AG04450 (cell line): ENCODE measurements at regions of chr20 and their contacts with region 1.

Region 1: DNA sequence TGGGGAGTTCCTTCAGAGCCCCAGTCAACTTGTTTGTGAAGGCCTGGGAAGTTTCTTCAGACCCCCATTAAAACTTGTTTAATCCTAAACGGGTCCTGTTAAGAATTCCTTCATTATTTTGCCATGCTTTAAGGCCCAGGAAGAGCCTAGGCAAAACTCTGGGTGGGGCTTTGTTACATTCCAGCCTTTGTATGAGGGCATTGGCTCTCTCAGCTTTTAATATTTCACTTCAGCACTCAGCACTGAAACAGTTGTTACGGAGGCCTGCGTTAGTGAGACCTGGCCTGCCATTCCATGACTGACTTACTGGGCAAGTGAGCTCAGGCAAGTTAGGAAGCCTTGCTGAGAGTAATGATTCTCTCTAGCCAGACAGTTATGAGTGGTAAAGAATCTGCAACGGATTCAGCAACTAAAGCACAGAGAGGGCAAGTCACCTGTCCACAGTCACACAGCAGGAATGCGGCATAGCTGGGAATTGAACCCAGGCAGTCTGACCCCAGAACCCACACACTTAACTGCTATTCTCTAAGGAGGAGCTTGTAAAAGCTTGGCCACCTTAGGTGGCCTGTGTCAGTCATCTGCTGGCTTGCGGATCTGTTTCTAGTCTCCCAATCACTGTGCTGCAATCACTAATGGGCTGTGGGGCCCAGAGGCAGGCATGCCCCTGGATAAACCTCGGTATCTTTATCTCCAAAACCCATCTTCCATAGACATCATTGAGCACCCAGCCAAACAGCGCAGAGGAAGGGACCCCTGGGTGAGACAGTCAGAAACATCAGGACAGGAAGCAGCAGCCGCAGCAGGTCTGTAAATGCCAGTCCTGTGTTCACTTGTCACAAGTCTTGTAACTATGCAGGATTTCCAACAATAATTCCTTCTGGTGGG is 215.8 kb upstream of the KCNG1 start:
- DNase-seq: no peak
- H3K4me3 ChIP-seq: no peak overlapping the region
- H3K27ac ChIP-seq: no peak overlapping the region
- H3K27me3 ChIP-seq: peaks cover 17% of the 10 kb centered on the region
- CTCF ChIP-seq: no peak

Region 2: GRCh38 chr20:51172974-51173397 is 65.7 kb before region 1 on chr20:
- CTCF ChIA-PET with region 1: no interaction called
- POLR2A ChIA-PET with region 1: no interaction called
- DNase-seq: no peak
- H3K4me3 ChIP-seq: no peak overlapping the region
- H3K27ac ChIP-seq: no peak overlapping the region
- H3K27me3 ChIP-seq: peaks cover 22% of the 10 kb centered on the region
- CTCF ChIP-seq: no peak

Region 3: GRCh38 chr20:51220293-51220706 is 18.4 kb before region 1 on chr20:
- CTCF ChIA-PET with region 1: interaction called, 12 read pairs
- POLR2A ChIA-PET with region 1: no interaction called
- DNase-seq: no peak
- H3K4me3 ChIP-seq: no peak overlapping the region
- H3K27ac ChIP-seq: no peak overlapping the region
- H3K27me3 ChIP-seq: peaks cover 17% of the 10 kb centered on the region
- CTCF ChIP-seq: peak; percentile 83